Activated CD4-positive, alpha-beta T cell treated with anti-CD3 and anti-CD28 coated beads for 36 hours (primary cell): ENCODE measurements at regions of chr4 and their contacts with region 1.

Region 1: GRCh38 chr4:152779513-152780266 is at the starts of genes ARFIP1 and TIGD4:
- DNase-seq: peak; percentile 97
- ATAC-seq: peak; percentile 91
- H3K4me3 Mint-ChIP-seq: peak within 1 kb of the TSS; percentile 96
- H3K27ac Mint-ChIP-seq: peak within 1 kb of the TSS; percentile 94
- H3K4me1 Mint-ChIP-seq: peaks cover 44% of the 10 kb centered on the region
- H3K27me3 Mint-ChIP-seq: peaks cover 5% of the 10 kb centered on the region
- total RNA-seq, gene ARFIP1: 8.4 to 10.5 TPM
- total RNA-seq, gene TIGD4: 0.27 to 0.28 TPM

Region 2: DNA sequence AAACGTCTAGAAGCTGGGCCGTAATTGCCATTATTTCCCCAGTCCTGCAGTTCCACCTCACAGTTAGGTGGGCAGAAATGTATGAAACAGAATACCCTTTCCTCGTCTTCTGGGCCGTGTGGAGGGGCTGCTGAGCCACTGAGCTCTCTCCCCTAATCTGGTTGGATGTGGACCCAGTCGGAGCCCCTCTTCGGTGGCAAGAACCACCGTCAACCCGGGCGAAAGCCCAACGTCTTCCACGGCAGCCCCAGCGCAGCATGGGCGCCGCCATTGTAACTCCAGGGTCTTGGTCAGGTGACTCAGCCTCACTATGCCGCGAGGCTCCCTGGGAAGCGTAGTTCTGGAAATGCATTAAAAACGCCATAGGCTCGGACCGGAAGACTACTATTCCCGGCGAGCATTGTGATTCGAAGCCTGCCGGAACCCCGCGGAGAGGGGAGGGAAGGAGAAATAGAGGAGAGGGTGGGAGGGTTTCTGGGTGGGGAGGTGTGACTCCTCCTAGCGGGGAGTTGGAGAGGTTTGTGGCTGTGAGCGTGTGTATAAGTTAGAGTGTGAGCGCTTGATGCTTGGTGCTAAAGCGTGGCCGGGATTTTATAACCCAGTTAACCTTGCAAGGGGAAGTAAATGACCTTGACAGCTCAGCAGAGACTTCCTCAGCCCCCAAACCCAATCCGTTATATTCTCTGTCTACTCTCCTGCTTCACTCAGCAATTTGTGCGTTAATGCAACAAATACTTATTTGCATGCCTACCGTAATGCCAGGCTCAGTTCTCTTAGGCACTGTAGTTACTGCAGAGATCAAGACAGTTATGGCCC is 1018.8 kb before region 1 on chr4 and contains the start of gene GATB:
- CTCF ChIA-PET with region 1: no interaction called
- POLR2A ChIA-PET with region 1: no interaction called
- intact Hi-C with region 1: loop called in 1 of 2 experiments (anchors 2 kb)
- DNase-seq: peak; percentile 95
- ATAC-seq: peak; percentile 100
- H3K4me3 Mint-ChIP-seq: peak within 1 kb of the TSS; percentile 100
- H3K27ac Mint-ChIP-seq: peak within 1 kb of the TSS; percentile 99
- H3K4me1 Mint-ChIP-seq: peaks cover 18% of the 10 kb centered on the region
- H3K27me3 Mint-ChIP-seq: no peaks in the 10 kb centered on the region
- total RNA-seq, gene GATB: 21.2 to 25.6 TPM

Region 3: DNA sequence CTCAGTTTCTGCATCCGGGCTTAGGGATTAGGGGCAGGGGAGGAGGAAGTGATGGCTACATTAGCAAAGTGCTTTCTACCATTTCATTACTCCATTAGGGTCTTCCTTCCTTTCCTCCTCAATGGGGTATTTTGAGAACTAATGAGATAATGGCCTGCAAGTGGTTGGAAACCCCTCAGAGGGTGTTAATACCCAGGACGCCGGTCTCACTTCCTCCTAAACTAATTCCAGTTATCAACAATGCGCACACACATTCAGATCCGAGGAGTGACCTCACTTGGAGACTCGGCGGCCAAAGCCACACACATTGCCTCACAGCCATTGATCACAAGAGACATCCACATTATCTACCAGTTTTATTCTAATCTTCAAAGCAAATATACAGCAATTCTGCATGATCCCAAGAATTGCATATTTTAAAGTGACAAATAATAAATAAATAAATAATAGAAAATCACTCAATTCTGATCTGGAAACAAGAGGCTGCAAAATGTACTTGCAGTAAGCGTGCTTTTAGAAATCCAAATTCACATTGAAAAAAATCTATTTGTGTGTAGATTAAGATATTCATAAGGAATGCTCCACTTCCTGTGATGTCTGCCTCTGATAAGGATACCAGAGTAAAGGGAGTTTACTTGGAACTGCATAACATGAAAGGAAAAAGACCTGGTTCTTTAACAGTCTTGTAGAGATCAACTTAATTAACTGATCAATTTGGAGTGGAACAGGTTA is 572.9 kb before region 1 on chr4:
- CTCF ChIA-PET with region 1: no interaction called
- POLR2A ChIA-PET with region 1: no interaction called
- intact Hi-C with region 1: no loop called
- DNase-seq: no peak
- ATAC-seq: no peak
- H3K4me3 Mint-ChIP-seq: no peak overlapping the region
- H3K27ac Mint-ChIP-seq: no peak overlapping the region
- H3K4me1 Mint-ChIP-seq: no peaks in the 10 kb centered on the region
- H3K27me3 Mint-ChIP-seq: no peaks in the 10 kb centered on the region

Region 4: GRCh38 chr4:152679414-152680281 is 100.0 kb before region 1 on chr4 and contains the start of gene TMEM154:
- CTCF ChIA-PET with region 1: interaction called, 3 read pairs
- POLR2A ChIA-PET with region 1: no interaction called
- intact Hi-C with region 1: loop called (anchors 1 to 5 kb)
- DNase-seq: peak; percentile 80
- ATAC-seq: peak; percentile 91
- H3K4me3 Mint-ChIP-seq: peak within 1 kb of the TSS; percentile 84
- H3K27ac Mint-ChIP-seq: peak within 1 kb of the TSS; percentile 85
- H3K4me1 Mint-ChIP-seq: peaks cover 53% of the 10 kb centered on the region
- H3K27me3 Mint-ChIP-seq: no peaks in the 10 kb centered on the region
- total RNA-seq, gene TMEM154: 15.2 to 21.2 TPM

Region 5: DNA sequence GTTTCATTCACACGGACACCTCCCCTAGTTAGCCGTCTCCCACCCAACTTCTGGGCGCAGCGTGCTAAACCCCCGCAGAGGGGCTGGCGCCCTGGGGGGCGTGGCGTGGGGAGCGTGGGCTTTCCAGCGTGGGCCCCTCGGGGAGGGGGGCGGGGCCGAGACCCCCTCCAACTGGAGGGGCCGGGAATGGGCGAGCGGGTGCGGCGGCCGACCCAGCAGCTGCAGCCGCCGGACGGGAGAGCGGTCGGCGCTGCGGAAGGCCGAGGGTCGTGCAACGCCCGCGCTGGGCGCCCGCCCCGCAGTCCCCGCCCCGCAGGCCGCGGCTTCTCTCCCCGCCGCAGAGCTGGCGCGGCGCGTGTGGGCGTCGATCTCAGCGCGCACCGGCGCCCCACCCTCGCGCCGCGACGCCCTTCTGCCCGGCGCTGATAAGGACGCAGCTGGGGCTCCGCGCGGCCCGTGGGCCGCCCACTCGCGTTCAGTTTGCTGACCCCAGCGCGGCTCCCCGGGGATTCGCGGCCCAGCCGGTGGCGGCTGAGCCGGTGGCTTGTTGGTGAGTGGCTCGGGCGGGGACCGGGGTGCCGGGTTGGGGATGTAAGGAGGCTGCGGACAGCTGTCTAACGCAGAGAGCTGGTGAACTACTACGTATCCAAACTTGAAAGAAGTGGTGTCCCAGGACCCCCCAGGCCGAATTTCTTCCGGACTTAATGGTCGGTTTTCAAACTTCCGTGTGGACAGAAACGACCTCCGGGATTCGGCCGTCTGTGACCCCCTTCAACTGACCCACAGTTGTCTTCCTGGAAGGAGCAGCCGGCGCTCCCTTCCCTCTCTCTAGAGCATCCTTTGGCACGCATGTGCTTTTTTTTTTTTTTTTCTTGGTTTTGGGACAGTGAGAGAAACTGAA is 157.9 kb after region 1 on chr4:
- CTCF ChIA-PET with region 1: no interaction called
- POLR2A ChIA-PET with region 1: no interaction called
- intact Hi-C with region 1: loop called in 1 of 2 experiments (anchors 2 kb)
- DNase-seq: peak; percentile 35
- ATAC-seq: no peak
- H3K4me3 Mint-ChIP-seq: peak overlapping the region; percentile 59
- H3K27ac Mint-ChIP-seq: no peak overlapping the region
- H3K4me1 Mint-ChIP-seq: peaks cover 15% of the 10 kb centered on the region
- H3K27me3 Mint-ChIP-seq: peaks cover 48% of the 10 kb centered on the region

Region 6: DNA sequence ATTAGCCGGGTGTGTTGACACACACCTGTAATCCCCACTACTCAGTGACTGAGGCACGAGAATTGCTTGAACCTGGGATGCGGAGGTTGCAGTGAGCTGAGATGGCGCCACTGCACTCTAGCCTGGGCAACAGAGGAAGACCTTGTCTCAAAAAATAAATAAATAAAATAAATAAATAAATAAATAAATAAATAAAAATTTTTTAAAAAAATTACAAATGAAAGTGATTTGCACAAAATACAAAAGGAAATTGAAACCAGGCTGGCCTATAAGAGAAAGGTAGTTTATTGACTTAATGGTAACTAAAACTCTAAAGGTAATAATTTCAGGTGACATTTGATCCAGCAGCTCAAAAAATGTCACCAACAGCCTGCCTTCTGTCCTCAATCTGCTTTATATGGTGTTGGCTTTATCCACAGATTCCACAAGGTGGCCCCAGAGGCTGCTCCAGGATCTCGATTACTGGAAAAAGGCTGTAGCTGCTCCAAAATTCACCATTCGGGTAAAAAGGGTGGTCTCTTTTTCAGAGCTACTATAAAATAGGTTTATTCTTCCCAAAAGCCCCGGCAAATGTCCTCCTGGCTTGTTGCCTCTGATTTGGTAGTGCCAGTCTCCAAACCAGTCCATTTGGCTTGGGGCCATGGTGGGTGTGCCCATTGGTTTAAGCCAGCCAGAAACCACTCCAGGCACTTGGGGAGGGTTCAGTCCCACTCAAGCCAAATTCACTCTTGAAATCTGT is 363.2 kb after region 1 on chr4:
- CTCF ChIA-PET with region 1: no interaction called
- POLR2A ChIA-PET with region 1: no interaction called
- intact Hi-C with region 1: no loop called
- DNase-seq: peak; percentile 79
- ATAC-seq: peak; percentile 85
- H3K4me3 Mint-ChIP-seq: no peak overlapping the region
- H3K27ac Mint-ChIP-seq: no peak overlapping the region
- H3K4me1 Mint-ChIP-seq: peaks cover 8% of the 10 kb centered on the region
- H3K27me3 Mint-ChIP-seq: peaks cover 3% of the 10 kb centered on the region

Region 7: DNA sequence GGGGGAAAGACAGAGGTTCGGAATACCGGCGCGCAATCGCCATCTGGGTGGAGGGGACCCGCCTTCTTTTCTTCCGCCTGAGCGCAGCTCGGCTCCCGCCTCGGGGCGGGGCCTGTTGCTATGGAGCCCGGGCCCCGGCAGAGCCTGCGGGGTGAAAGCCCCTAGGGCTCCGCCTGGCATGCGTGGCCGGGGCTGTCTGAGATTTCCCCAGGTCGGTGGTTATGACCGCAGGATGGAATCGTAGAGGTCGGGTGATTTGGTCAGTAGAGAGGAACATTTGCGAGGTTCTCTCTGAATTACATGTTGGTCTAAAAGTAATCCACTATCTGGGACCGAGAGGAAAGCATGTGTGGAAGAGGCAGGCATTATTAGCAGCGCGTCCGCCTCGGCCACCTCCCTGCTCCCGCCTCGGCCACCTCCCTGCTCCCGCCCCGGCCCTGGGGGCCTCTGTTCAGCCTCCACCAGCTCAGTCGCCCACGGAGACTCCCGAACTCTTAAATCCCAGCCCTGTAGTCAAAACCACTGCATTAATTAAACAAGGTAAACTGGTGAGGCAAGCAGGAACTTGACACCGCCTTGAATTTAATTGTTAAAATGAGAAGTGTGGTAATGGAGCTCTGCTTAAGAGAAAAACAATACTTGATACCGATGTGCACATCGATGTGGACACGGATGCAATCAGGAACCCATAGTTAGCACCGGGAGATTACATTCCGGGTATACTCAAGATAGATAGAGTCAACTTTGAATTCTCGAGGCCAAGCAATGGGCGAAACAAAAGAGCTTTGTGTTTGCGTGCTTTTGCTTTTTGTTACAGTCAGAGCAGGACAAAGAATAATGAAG is 469.7 kb after region 1 on chr4:
- CTCF ChIA-PET with region 1: no interaction called
- POLR2A ChIA-PET with region 1: no interaction called
- intact Hi-C with region 1: loop called in 1 of 2 experiments (anchors 1 kb)
- DNase-seq: peak; percentile 91
- ATAC-seq: peak; percentile 98
- H3K4me3 Mint-ChIP-seq: peak overlapping the region; percentile 71
- H3K27ac Mint-ChIP-seq: peak overlapping the region; percentile 63
- H3K4me1 Mint-ChIP-seq: peaks cover 11% of the 10 kb centered on the region
- H3K27me3 Mint-ChIP-seq: no peaks in the 10 kb centered on the region